ENCODE measurements at regions of chr9 and their contacts with region 1.

Region 1: DNA sequence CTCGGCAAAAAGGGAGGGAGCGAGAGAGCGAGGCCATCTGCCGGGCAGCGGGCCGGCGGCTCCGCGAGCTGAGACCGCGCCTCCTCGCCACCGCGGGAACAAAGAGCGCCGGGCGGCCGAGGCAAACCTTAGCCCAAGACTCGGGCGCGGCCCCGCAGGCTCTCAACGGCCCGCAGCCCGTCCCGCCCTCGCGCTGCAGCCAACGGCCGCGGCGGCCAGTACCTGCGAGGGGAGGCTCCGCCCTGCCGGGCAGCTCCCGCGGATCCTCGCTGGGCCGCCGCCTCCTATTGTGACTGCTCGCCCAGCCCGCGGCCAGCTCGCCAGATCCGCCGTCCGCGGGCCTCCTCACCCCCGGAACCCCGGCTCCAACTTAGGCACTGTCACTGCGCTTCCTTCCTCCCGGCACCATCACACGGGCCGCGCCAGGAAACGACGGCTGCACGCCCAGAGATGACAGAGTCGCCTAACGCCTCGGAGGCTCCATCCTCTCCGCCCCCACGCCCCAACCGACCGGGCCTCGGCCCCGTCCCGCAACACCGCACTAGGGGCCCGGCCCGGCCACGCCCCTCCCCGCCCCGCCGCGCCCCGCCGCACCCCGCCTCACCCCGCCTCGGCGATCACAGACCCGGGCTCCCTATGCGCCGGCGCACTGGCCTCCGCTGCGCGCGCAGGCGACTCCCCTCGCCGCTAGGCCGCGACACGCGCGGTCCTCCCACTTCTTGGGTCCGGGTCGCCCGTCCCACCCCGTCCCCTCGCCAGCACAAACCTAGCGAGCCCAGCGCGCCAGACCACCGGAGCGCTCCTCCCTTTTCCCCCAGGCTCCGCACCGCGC is 479 bp upstream of the RNF38 start:
- DNase-seq: peak; percentile 83 to 94 (median 91)
- ATAC-seq: peak; percentile 88
- H3K4me3 ChIP-seq: peak overlapping the region; percentile 77
- H3K4me3 Mint-ChIP-seq: peak overlapping the region; percentile 85 to 97 (median 92)
- H3K27ac ChIP-seq: peak overlapping the region; percentile 94
- H3K27ac Mint-ChIP-seq: peak overlapping the region; percentile 92 to 98 (median 95)
- H3K4me1 ChIP-seq: peaks cover 16 to 26% of the 10 kb centered on the region in 2 donors
- H3K4me1 Mint-ChIP-seq: peaks cover 32 to 60% (median 54%) of the 10 kb centered on the region in 7 donors
- H3K27me3 ChIP-seq: no peaks in the 10 kb centered on the region
- H3K27me3 Mint-ChIP-seq: peaks cover 0 to 2% (median 0%) of the 10 kb centered on the region in 5 donors

Region 2: GRCh38 chr9:36136272-36136893 is 264.2 kb before region 1 on chr9 and contains the start of gene GLIPR2:
- CTCF ChIA-PET with region 1: no interaction called
- POLR2A ChIA-PET with region 1: no interaction called
- intact Hi-C with region 1: loop called (anchors 5 kb)
- DNase-seq: peak; percentile 60 to 88 (median 69)
- ATAC-seq: peak; percentile 97
- H3K4me3 ChIP-seq: peak within 1 kb of the TSS; percentile 78
- H3K4me3 Mint-ChIP-seq: peak within 1 kb of the TSS; percentile 83 to 99 (median 93)
- H3K27ac ChIP-seq: peak within 1 kb of the TSS; percentile 74
- H3K27ac Mint-ChIP-seq: peak within 1 kb of the TSS; percentile 25 to 94 (median 87)
- H3K4me1 ChIP-seq: peaks cover 43 to 49% of the 10 kb centered on the region in 2 donors
- H3K4me1 Mint-ChIP-seq: peaks cover 43 to 52% (median 49%) of the 10 kb centered on the region in 7 donors
- H3K27me3 ChIP-seq: no peaks in the 10 kb centered on the region
- H3K27me3 Mint-ChIP-seq: peaks cover 0 to 39% (median 0%) of the 10 kb centered on the region in 5 donors
- total RNA-seq, gene GLIPR2: 7.7 to 74.7 (median 18.6) TPM

Region 3: GRCh38 chr9:36382484-36382883 is 18.1 kb before region 1 on chr9:
- CTCF ChIA-PET with region 1: no interaction called
- POLR2A ChIA-PET with region 1: no interaction called
- intact Hi-C with region 1: loop called in 1 of 2 experiments (anchors 2 kb)
- DNase-seq: no peak
- ATAC-seq: no peak
- H3K4me3 ChIP-seq: no peak overlapping the region
- H3K4me3 Mint-ChIP-seq: peak overlapping the region in 5 of 10 donors; percentile 16 to 35 (median 23)
- H3K27ac ChIP-seq: no peak overlapping the region
- H3K27ac Mint-ChIP-seq: peak overlapping the region in 7 of 9 donors; percentile 1 to 77 (median 26)
- H3K4me1 ChIP-seq: peaks cover 10 to 33% of the 10 kb centered on the region in 2 donors
- H3K4me1 Mint-ChIP-seq: peaks cover 38 to 82% (median 72%) of the 10 kb centered on the region in 7 donors
- H3K27me3 ChIP-seq: no peaks in the 10 kb centered on the region
- H3K27me3 Mint-ChIP-seq: no peaks in the 10 kb centered on the region

Region 4: GRCh38 chr9:36415822-36416515 is 15.4 kb after region 1 on chr9:
- CTCF ChIA-PET with region 1: no interaction called
- POLR2A ChIA-PET with region 1: no interaction called
- intact Hi-C with region 1: no loop called
- DNase-seq: no peak
- ATAC-seq: no peak
- H3K4me3 ChIP-seq: no peak overlapping the region
- H3K4me3 Mint-ChIP-seq: no peak overlapping the region
- H3K27ac ChIP-seq: no peak overlapping the region
- H3K27ac Mint-ChIP-seq: peak overlapping the region in 5 of 9 donors; percentile 5 to 58 (median 36)
- H3K4me1 ChIP-seq: no peaks in the 10 kb centered on the region
- H3K4me1 Mint-ChIP-seq: peaks cover 5 to 43% (median 31%) of the 10 kb centered on the region in 7 donors
- H3K27me3 ChIP-seq: no peaks in the 10 kb centered on the region
- H3K27me3 Mint-ChIP-seq: no peaks in the 10 kb centered on the region

Region 5: DNA sequence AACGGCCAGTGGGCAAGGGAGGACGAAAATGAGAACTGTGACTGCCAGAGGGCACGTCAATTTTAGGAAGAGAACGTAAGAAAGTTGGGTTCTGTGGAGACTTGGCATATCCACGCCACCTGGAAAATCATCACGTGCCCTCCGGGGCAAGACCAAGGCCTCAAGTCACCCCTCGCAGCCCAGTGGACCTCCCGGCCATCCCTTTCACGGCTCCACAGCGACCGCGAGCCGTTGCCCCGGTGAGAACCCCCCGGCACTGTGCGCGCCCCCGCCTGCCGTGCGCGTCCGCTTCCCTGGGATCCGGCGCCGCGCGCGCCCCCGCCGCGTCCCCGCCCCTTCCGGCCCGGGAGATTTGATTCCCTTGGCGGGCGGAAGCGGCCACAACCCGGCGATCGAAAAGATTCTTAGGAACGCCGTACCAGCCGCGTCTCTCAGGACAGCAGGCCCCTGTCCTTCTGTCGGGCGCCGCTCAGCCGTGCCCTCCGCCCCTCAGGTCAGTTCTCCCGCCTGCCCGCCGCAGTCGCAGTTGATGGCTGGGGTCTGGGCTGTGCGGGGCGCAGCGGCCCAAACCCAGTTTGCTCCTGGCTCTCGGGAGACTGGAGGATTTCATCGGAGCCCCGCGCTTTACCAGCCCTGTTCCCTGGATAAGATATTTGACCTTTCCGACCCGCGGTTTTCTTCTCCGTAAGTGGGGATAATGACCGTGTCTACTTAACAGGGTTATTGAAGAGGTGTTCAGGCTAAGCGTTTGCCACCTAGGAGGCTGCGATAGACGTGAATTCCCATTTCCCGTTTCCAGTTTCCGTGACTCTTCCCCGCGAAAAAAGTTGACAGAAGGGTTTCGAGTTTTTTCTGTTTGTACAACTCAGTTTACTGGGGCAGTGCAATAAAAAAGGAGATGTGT is 172.2 kb after region 1 on chr9 and contains the start of gene MELK:
- CTCF ChIA-PET with region 1: interaction called, 5 read pairs
- POLR2A ChIA-PET with region 1: interaction called, 3 read pairs
- intact Hi-C with region 1: loop called (anchors 1 kb)
- DNase-seq: peak; percentile 69 to 94 (median 82)
- ATAC-seq: peak; percentile 97
- H3K4me3 ChIP-seq: peak within 1 kb of the TSS; percentile 83
- H3K4me3 Mint-ChIP-seq: peak within 1 kb of the TSS; percentile 88 to 95 (median 90)
- H3K27ac ChIP-seq: peak within 1 kb of the TSS; percentile 76
- H3K27ac Mint-ChIP-seq: peak within 1 kb of the TSS; percentile 62 to 90 (median 83)
- H3K4me1 ChIP-seq: peaks cover 0 to 5% of the 10 kb centered on the region in 2 donors
- H3K4me1 Mint-ChIP-seq: peaks cover 7 to 38% (median 13%) of the 10 kb centered on the region in 7 donors
- H3K27me3 ChIP-seq: no peaks in the 10 kb centered on the region
- H3K27me3 Mint-ChIP-seq: peaks cover 0 to 5% (median 0%) of the 10 kb centered on the region in 5 donors
- total RNA-seq, gene MELK: 0.22 to 40.2 (median 0.88) TPM in 3 of 5 experiments, not detected in the others

Region 6: GRCh38 chr9:37144762-37145161 is 744.2 kb after region 1 on chr9:
- CTCF ChIA-PET with region 1: no interaction called
- POLR2A ChIA-PET with region 1: no interaction called
- intact Hi-C with region 1: loop called in 1 of 2 experiments (anchors 10 kb)
- DNase-seq: no peak
- ATAC-seq: no peak
- H3K4me3 ChIP-seq: no peak overlapping the region
- H3K4me3 Mint-ChIP-seq: peak overlapping the region in 9 of 10 donors; percentile 8 to 77 (median 50)
- H3K27ac ChIP-seq: no peak overlapping the region
- H3K27ac Mint-ChIP-seq: peak overlapping the region in 8 of 9 donors; percentile 23 to 91 (median 83)
- H3K4me1 ChIP-seq: peaks cover 19 to 47% of the 10 kb centered on the region in 2 donors
- H3K4me1 Mint-ChIP-seq: peaks cover 21 to 89% (median 71%) of the 10 kb centered on the region in 7 donors
- H3K27me3 ChIP-seq: no peaks in the 10 kb centered on the region
- H3K27me3 Mint-ChIP-seq: no peaks in the 10 kb centered on the region